ENCODE measurements at regions of chr7 and their contacts with region 1.

Region 1: GRCh38 chr7:90346336-90347125 is at the start of gene GTPBP10:
- DNase-seq: peak; percentile 86 to 89
- ATAC-seq: peak; percentile 97
- H3K4me3 ChIP-seq: peak within 1 kb of the TSS; percentile 63 to 99 (median 86)
- H3K27ac ChIP-seq: peak within 1 kb of the TSS; percentile 83 to 97 (median 88)
- H3K4me1 ChIP-seq: peaks cover 16 to 17% of the 10 kb centered on the region in 2 donors
- H3K27me3 ChIP-seq: no peaks in the 10 kb centered on the region
- CTCF ChIP-seq: peak; percentile 57 to 80 (median 68)
- POLR2A ChIP-seq: peak; percentile 54 to 70
- total RNA-seq, gene GTPBP10: 12.8 to 20.1 (median 16.4) TPM

Region 2: GRCh38 chr7:90244909-90245851 is 101.4 kb before region 1 on chr7 and contains the start of gene CFAP69:
- in situ Hi-C with region 1: no loop called
- intact Hi-C with region 1: loop called (anchors 5 kb)
- DNase-seq: peak; percentile 61 to 77
- ATAC-seq: peak; percentile 92 to 98
- H3K4me3 ChIP-seq: peak within 1 kb of the TSS; percentile 81 to 97 (median 92)
- H3K27ac ChIP-seq: peak within 1 kb of the TSS in 3 of 4 donors; percentile 21 to 57 (median 41)
- H3K4me1 ChIP-seq: peaks cover 6 to 19% of the 10 kb centered on the region in 2 donors
- H3K27me3 ChIP-seq: no peaks in the 10 kb centered on the region
- CTCF ChIP-seq: peak in 3 of 5 experiments; percentile 24 to 40 (median 39)
- POLR2A ChIP-seq: no peak
- total RNA-seq, gene CFAP69: 0.62 to 4.9 (median 1.6) TPM in 3 of 4 donors, not detected in the other

Region 3: GRCh38 chr7:90256778-90257177 is 89.8 kb before region 1 on chr7:
- in situ Hi-C with region 1: no loop called
- intact Hi-C with region 1: no loop called
- DNase-seq: no peak
- ATAC-seq: no peak
- H3K4me3 ChIP-seq: no peak overlapping the region
- H3K27ac ChIP-seq: no peak overlapping the region
- H3K4me1 ChIP-seq: no peaks in the 10 kb centered on the region
- H3K27me3 ChIP-seq: no peaks in the 10 kb centered on the region
- CTCF ChIP-seq: no peak
- POLR2A ChIP-seq: no peak

Region 4: GRCh38 chr7:90396420-90396819 is 49.9 kb after region 1 on chr7:
- in situ Hi-C with region 1: loop called in 3 of 4 experiments (anchors 10 kb)
- intact Hi-C with region 1: no loop called
- DNase-seq: no peak
- ATAC-seq: no peak
- H3K4me3 ChIP-seq: no peak overlapping the region
- H3K27ac ChIP-seq: no peak overlapping the region
- H3K4me1 ChIP-seq: no peaks in the 10 kb centered on the region
- H3K27me3 ChIP-seq: no peaks in the 10 kb centered on the region
- CTCF ChIP-seq: no peak
- POLR2A ChIP-seq: no peak

Region 5: DNA sequence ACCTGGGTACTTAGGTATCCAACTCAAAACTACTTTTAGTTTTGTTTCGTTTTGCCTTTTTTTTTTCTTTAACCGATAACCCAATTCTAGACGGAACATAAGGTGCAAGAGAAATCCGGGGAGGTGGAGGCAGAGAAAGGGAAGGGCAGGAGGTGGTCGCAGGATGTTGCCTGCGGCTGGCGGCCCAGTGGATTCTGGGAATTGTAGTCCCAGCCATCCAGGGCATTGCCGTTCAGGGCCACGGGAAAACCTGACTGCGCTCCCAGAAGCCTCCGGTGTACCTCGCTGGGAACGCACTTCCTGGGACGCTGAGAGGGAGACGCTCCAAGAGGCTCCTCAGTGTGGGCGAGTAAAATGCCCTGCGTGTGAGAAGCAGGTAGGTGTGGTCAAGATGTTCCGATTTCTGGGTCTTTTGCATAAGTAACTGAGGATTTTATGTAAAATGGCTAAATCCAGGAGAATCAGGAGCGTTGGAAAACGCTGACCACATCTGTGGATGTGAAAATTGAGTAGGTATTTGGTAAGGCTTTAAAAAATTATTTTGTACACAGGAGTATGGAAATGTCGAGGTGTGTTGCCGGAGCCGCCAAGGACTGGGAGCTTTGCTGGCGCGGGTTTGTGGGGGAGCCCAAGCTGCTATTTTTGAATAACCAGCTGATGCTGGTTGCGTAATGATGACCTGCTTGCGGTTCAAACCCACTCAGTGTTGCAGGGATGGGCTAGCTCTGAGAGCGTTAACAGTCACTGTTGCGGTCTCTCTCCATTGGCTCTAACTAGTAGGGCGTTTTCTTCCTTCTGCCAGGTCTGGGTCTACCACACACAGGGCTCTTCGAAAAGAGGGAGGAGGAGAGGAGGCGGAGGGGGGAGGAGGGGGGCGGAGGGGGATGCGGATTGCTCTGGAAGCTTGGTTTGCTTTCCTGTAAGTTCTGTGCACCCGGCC is 56.9 kb after region 1 on chr7 and contains the start of gene CLDN12:
- in situ Hi-C with region 1: loop called in 3 of 4 experiments (anchors 10 kb)
- intact Hi-C with region 1: loop called (anchors 1 kb)
- DNase-seq: peak; percentile 92
- ATAC-seq: peak; percentile 93
- H3K4me3 ChIP-seq: peak within 1 kb of the TSS; percentile 68 to 87 (median 78)
- H3K27ac ChIP-seq: peak within 1 kb of the TSS; percentile 93 to 99 (median 97)
- H3K4me1 ChIP-seq: peaks cover 23 to 29% of the 10 kb centered on the region in 2 donors
- H3K27me3 ChIP-seq: no peaks in the 10 kb centered on the region
- CTCF ChIP-seq: peak in 1 of 5 experiments; percentile 14
- POLR2A ChIP-seq: peak; percentile 76 to 77
- total RNA-seq, gene CLDN12: 9.5 to 39.9 (median 32.6) TPM

Region 6: DNA sequence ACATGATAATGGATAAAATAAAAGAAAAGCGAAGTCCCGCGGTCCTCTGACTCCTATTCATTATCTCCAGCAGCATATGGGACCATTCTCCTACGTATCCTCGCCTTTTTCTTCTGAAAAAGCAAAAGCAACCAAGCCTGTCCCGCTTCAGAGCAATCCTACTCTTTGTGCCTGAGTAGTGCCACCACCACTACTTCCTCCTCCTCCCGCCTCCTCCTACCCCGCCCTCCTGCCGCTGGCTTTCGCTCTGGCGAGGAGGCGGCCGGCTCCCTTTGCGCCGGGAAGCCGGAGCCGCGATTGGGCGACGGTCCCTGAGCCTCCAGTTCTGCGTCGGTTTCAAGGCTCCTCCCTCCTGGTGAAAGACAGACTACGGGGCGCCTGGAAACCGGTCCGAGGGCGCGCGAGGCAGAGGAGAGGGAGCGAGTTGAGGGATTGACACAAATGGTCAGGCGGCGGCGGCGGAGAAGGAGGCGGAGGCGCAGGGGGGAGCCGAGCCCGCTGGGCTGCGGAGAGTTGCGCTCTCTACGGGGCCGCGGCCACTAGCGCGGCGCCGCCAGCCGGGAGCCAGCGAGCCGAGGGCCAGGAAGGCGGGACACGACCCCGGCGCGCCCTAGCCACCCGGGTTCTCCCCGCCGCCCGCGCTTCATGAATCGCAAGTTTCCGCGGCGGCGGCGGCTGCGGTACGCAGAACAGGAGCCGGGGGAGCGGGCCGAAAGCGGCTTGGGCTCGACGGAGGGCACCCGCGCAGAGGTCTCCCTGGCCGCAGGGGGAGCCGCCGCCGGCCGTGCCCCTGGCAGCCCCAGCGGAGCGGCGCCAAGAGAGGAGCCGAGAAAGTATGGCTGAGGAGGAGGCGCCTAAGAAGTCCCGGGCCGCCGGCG is 917.8 kb after region 1 on chr7 and contains the start of gene FZD1:
- in situ Hi-C with region 1: no loop called
- intact Hi-C with region 1: loop called (anchors 5 kb)
- DNase-seq: peak; percentile 94 to 96
- ATAC-seq: peak; percentile 92 to 93
- H3K4me3 ChIP-seq: peak within 1 kb of the TSS; percentile 62 to 85 (median 74)
- H3K27ac ChIP-seq: peak within 1 kb of the TSS; percentile 77 to 95 (median 89)
- H3K4me1 ChIP-seq: peaks cover 0 to 8% of the 10 kb centered on the region in 2 donors
- H3K27me3 ChIP-seq: no peaks in the 10 kb centered on the region
- CTCF ChIP-seq: peak in 2 of 5 experiments; percentile 19 to 21
- POLR2A ChIP-seq: peak; percentile 61 to 90
- total RNA-seq, gene FZD1: 2.1 to 4.1 (median 3.5) TPM